Psoas muscle (tissue), 8 donors: ENCODE measurements at regions of chrX and their contacts with region 1.

Region 1: DNA sequence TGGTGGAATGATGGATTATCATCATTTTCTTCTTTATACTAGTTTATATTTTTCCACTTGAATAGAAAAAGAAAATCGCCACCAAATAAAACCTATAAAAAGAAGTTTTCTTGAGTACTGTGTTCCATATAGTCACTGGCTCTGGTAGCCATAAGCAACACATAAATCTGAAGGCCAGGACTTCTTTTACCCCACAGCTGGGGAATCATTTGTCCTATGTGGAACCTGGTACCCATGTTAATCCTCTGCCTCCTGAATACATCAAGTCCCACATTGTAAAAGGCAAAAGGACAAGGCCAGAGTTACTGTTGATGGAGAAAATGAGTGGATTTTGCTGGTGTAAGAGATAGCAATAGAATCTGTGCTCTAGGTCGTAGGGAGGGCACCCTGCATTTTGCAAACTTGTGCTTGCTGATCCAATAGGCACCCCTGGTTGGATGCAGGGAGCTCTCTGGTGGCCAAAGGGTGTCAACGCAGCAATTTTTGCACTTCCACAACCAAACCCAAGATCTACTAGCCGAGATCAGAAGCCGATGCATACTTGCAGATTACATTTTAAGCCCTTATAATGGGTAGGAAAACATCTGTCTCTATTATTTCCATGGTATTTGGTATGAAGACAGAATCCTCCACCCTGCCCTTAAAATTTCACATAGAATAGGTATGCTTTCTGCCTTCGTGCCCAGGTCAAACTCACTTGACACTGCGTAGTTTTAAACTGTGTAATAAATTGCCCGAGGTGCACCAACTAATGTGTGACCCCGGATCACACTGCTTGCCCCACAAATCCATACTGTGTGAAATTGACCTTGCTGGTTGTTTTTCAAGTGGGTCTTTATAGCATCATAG is 146.2 kb upstream of the SCML1 start:
- DNase-seq: peak; percentile 40 to 65
- ATAC-seq: peak; percentile 86 to 96 (median 90)
- H3K4me3 ChIP-seq: peak overlapping the region; percentile 21
- H3K27ac ChIP-seq: no peak overlapping the region
- H3K4me1 ChIP-seq: peaks cover 3% of the 10 kb centered on the region
- H3K27me3 ChIP-seq: peaks cover 0 to 3% (median 0%) of the 10 kb centered on the region in 3 donors
- CTCF ChIP-seq: peak; percentile 67

Region 2: DNA sequence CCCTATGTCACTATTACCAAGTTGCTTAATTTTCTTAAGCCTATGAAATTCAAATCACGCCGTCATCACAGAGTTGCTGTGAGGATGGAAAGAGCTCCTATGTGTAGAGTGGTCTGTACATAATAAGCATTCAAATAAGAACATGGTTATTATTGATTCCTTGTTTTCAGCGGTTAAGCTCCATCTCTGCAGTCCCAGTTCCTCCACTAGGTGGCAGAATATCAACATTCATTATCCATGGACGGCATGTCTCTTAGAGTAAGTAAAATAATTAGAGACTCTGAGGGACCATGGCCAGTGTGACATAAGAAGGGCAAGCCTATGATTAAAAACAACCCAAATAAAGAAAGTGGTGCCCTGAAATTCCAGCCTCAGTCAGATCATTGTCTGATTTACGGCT is 348.6 kb before region 1 on chrX:
- intact Hi-C with region 1: loop called (anchors 2 to 5 kb)
- DNase-seq: no peak
- ATAC-seq: peak in 2 of 4 donors; percentile 40 to 46
- H3K4me3 ChIP-seq: no peak overlapping the region
- H3K27ac ChIP-seq: no peak overlapping the region
- H3K4me1 ChIP-seq: no peaks in the 10 kb centered on the region
- H3K27me3 ChIP-seq: peaks cover 0 to 12% (median 0%) of the 10 kb centered on the region in 3 donors
- CTCF ChIP-seq: peak; percentile 73

Region 3: DNA sequence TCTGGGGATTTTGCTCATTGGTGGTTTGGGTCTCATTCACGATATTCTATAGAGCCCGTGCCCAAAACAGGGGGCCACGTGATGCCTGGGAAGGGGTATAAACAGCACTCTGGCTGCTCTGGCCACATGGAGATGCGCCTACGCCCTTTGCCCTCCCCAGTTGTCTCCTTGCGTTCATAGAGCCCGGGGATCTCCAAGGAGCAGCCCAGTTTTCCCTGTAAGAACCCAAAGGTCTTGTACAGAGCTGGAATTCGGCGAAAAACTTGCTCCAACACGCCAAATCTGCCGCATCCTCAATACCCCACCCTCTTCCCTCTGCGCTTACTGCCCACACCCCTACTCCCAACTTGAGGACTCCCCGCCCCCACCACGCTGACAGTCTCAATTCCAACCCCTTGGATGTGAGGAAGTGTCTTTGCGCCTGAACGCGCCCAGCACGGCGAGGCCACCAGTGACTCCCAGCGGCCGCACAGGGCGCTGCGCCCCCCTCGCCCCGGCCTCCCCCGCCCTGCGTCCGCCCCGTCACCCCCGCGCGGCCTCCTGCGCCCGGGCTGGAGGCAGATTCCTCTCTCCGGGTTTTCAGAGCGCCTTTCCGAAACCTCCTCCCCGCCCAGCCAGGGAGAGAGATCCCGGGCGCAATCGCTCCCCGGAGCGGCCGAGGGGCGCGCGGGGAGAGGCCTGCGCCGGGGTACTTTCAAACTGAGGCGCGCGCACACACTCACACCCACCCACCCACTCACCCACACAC is 216.3 kb before region 1 on chrX and contains the start of gene NHS:
- intact Hi-C with region 1: loop called in 1 of 2 experiments (anchors 10 kb)
- DNase-seq: peak; percentile 72 to 77
- ATAC-seq: peak; percentile 54 to 86 (median 80)
- H3K4me3 ChIP-seq: peak within 1 kb of the TSS; percentile 63
- H3K27ac ChIP-seq: no peak within 1 kb of the TSS
- H3K4me1 ChIP-seq: no peaks in the 10 kb centered on the region
- H3K27me3 ChIP-seq: peaks cover 0 to 36% (median 2%) of the 10 kb centered on the region in 3 donors
- CTCF ChIP-seq: peak; percentile 31
- total RNA-seq, gene NHS: 0.22 to 1.3 (median 0.37) TPM

Region 4: GRCh38 chrX:17521871-17522693 is 69.0 kb before region 1 on chrX:
- intact Hi-C with region 1: no loop called
- DNase-seq: no peak
- ATAC-seq: no peak
- H3K4me3 ChIP-seq: no peak overlapping the region
- H3K27ac ChIP-seq: no peak overlapping the region
- H3K4me1 ChIP-seq: no peaks in the 10 kb centered on the region
- H3K27me3 ChIP-seq: peaks cover 0 to 13% (median 0%) of the 10 kb centered on the region in 3 donors
- CTCF ChIP-seq: no peak

Region 5: DNA sequence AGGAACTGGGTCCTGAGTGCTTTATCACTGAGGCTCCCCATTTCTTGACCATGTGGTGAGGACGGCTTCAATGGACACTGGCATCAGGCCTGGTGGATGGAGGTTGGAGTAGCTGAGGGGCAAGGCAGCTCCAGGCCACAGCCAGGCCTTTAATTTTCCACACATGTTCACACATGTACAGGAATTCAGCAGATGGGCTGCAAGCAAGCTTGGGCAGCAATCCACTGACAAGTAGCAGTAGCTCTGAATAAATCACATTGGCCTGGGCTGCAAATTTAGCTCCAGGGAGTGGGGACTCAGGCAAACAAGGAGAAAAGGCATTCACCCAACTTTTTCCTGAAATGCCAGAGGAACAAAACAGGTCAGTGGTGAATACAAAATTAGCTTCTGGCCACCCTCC is 38.4 kb after region 1 on chrX:
- intact Hi-C with region 1: no loop called
- DNase-seq: no peak
- ATAC-seq: no peak
- H3K4me3 ChIP-seq: no peak overlapping the region
- H3K27ac ChIP-seq: no peak overlapping the region
- H3K4me1 ChIP-seq: no peaks in the 10 kb centered on the region
- H3K27me3 ChIP-seq: peaks cover 0 to 3% (median 0%) of the 10 kb centered on the region in 3 donors
- CTCF ChIP-seq: no peak